IMR-90 (cell line): ENCODE measurements at regions of chr6 and their contacts with region 1.

Region 1: DNA sequence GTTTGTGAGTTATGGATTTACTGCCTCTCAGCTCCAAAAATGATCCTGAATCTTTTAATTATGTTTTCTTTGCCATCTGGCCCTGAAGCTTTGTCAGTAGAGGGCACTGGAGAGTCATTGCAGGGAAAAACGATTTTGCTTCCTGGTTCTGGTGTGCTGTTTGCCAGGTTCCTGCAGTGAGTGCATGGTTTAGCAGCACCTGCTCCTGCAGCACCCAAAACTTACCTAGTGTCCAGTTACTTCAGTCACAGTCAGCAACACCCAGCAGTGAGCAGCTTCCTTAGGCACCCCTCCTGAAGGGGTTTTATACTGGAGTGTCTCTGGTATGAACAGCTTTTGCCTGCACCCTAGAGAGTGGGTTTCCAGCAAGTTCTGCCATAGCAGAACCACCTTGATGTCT is 6.0 kb upstream of the TRIM26 start:
- DNase-seq: peak; percentile 44
- ATAC-seq: peak; percentile 57; the same call in 1 of the 2 replicates
- H3K4me3 ChIP-seq: no peak overlapping the region
- H3K27ac ChIP-seq: no peak overlapping the region
- H3K4me1 ChIP-seq: peaks cover 2% of the 10 kb centered on the region; the same call in 1 of the 2 replicates
- H3K27me3 ChIP-seq: no peaks in the 10 kb centered on the region
- CTCF ChIP-seq: peak; percentile 90
- POLR2A ChIP-seq: no peak
- RAD21 ChIP-seq: peak; percentile 70

Region 2: GRCh38 chr6:28695715-28696114 is 1523.5 kb before region 1 on chr6:
- CTCF ChIA-PET with region 1: no interaction called
- POLR2A ChIA-PET with region 1: no interaction called
- dilution Hi-C with region 1: no loop called
- in situ Hi-C with region 1: no loop called
- intact Hi-C with region 1: no loop called
- DNase-seq: peak; percentile 41
- ATAC-seq: peak; percentile 81
- H3K4me3 ChIP-seq: no peak overlapping the region
- H3K27ac ChIP-seq: no peak overlapping the region
- H3K4me1 ChIP-seq: no peaks in the 10 kb centered on the region
- H3K27me3 ChIP-seq: peaks cover 28% of the 10 kb centered on the region
- CTCF ChIP-seq: no peak
- POLR2A ChIP-seq: no peak
- RAD21 ChIP-seq: no peak

Region 3: GRCh38 chr6:30102970-30103874 is 116.0 kb before region 1 on chr6:
- CTCF ChIA-PET with region 1: no interaction called
- POLR2A ChIA-PET with region 1: no interaction called
- dilution Hi-C with region 1: no loop called
- in situ Hi-C with region 1: no loop called
- intact Hi-C with region 1: loop called (anchors 5 kb)
- DNase-seq: peak; percentile 80
- ATAC-seq: peak; percentile 77
- H3K4me3 ChIP-seq: peak overlapping the region; percentile 30
- H3K27ac ChIP-seq: no peak overlapping the region
- H3K4me1 ChIP-seq: peaks cover 6% of the 10 kb centered on the region
- H3K27me3 ChIP-seq: peaks cover 51% of the 10 kb centered on the region
- CTCF ChIP-seq: peak; percentile 94
- POLR2A ChIP-seq: peak; percentile 42; the same call in 1 of the 2 replicates
- RAD21 ChIP-seq: peak; percentile 85

Region 4: GRCh38 chr6:30326526-30327260 is 107.4 kb after region 1 on chr6 and contains the start of gene TRIM39:
- CTCF ChIA-PET with region 1: interaction called, 9 read pairs
- POLR2A ChIA-PET with region 1: no interaction called
- dilution Hi-C with region 1: no loop called
- in situ Hi-C with region 1: no loop called
- intact Hi-C with region 1: loop called (anchors 1 kb)
- DNase-seq: peak; percentile 84
- ATAC-seq: peak; percentile 79
- H3K4me3 ChIP-seq: peak within 1 kb of the TSS; percentile 96
- H3K27ac ChIP-seq: peak within 1 kb of the TSS; percentile 96
- H3K4me1 ChIP-seq: peaks cover 5% of the 10 kb centered on the region; the same call in 1 of the 2 replicates
- H3K27me3 ChIP-seq: no peaks in the 10 kb centered on the region
- CTCF ChIP-seq: no peak
- POLR2A ChIP-seq: peak; percentile 83
- RAD21 ChIP-seq: no peak
- total RNA-seq, gene TRIM39: 9.4 and 10.0 TPM in 2 replicates

Region 5: DNA sequence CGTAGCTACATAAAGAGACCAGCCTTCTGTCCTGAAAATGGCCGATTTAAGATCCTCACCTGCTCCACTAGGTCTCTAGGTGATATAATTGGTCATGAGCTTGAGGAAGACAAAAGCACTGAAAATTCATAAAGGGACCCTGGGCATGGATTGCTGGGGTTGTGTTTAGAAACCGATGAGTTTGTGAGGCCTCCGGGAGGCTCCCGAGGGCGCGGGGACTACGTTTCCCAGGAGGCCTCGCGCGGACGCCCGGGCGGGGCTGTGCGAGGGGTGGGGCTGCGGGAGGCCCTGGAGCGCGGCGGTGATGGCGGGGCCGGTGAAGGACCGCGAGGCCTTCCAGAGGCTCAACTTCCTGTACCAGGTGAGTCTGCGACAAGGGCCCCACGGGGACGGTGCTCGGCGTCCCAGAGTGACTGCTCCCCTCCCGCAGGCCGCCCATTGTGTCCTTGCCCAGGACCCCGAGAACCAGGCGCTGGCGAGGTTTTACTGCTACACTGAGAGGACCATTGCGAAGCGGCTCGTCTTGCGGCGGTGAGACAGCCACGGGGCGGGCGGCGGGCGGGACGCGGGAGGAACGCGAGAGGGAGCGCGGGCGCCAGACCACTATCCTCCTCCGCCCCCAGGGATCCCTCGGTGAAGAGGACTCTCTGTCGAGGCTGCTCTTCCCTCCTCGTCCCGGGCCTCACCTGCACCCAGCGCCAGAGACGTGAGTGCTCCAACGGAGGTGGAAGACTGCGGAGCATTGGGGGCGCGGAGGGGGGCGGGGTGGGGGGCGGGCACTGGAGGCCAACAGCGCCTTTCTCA is 125.8 kb after region 1 on chr6 and contains the start of gene RPP21:
- CTCF ChIA-PET with region 1: interaction called, 3 read pairs
- POLR2A ChIA-PET with region 1: no interaction called
- dilution Hi-C with region 1: no loop called
- in situ Hi-C with region 1: no loop called
- intact Hi-C with region 1: loop called (anchors 5 kb)
- DNase-seq: peak; percentile 70
- ATAC-seq: peak; percentile 99
- H3K4me3 ChIP-seq: peak within 1 kb of the TSS; percentile 98
- H3K27ac ChIP-seq: peak within 1 kb of the TSS; percentile 93
- H3K4me1 ChIP-seq: no peaks in the 10 kb centered on the region
- H3K27me3 ChIP-seq: no peaks in the 10 kb centered on the region
- CTCF ChIP-seq: no peak
- POLR2A ChIP-seq: peak; percentile 85
- RAD21 ChIP-seq: no peak
- total RNA-seq, gene RPP21: 20.6 and 28.9 TPM in 2 replicates

Region 6: DNA sequence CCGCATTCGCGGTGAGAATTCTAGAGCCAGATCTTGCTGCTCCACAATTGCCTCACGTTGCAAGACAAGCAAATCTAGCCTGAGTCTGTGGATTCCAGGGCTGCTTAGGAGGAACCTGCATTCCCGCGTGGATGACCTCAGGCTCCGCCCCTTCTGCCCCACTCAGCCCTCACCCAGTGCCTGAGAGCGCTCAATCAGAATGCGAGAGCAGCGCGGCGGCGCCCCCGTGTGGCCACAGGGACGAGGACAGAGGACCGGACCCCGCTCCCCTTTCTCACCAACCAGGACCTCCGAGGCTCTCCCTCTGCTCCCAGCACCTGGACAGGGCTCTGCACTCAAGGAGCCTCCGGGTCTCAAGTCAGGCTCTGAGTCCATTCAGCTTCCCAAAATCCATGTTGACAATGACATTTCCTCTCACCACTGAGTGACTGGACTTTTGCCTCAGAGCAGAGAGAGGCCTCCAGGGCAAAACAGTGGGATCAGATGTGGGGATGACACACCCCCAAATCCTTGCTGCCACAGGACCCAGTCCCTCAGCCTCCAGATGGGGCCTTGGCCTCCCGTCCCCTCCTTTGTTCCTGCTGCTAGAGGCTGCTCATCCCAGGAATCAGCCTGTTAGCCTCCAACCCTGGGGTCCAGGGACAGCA is 177.7 kb after region 1 on chr6:
- CTCF ChIA-PET with region 1: interaction called, 3 read pairs
- POLR2A ChIA-PET with region 1: no interaction called
- dilution Hi-C with region 1: no loop called
- in situ Hi-C with region 1: loop called (anchors 10 kb)
- intact Hi-C with region 1: loop called (anchors 1 kb)
- DNase-seq: peak; percentile 47
- ATAC-seq: peak; percentile 100
- H3K4me3 ChIP-seq: no peak overlapping the region
- H3K27ac ChIP-seq: no peak overlapping the region
- H3K4me1 ChIP-seq: no peaks in the 10 kb centered on the region
- H3K27me3 ChIP-seq: peaks cover 18% of the 10 kb centered on the region
- CTCF ChIP-seq: peak; percentile 82
- POLR2A ChIP-seq: no peak
- RAD21 ChIP-seq: peak; percentile 77

Region 7: DNA sequence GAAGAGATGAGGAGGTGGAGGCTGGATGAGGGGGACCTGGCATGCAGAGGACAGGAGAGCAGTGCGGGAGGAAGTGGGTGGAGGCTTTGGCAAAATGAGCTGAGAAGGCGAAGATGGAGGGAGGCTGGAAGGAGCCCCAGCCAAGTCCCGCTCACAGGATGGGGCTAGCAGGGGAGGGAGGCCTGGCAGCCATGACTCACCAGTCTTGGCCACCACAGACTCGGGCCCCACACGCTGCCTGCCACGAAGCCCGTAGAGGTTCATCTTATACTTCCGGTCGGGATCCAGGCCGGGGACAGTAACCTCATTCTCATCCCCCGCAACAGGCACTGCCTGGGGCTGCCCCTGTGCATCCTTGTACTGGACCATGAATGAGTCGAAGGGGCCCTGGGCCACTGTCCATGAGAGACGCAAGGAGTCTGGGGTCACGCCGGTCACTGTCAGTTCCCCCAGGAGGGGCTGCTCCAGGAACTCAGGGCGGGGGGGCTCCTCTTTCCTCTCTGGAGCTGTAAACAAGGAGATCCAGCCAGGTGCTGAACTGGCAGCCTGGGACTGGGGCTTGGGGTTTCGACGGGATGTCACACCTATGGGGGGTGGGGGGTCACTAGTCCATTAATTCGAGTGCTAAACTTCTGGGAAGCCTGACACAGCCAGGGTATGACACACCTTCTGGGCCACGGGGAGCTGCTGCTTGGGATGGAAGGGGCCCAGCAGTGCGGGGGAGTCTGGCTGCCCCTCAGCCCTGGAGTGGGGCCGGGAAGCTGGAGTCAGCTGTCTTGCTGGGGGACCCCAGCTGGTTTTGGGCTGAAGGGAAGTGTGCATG is 1862.1 kb after region 1 on chr6:
- CTCF ChIA-PET with region 1: no interaction called
- POLR2A ChIA-PET with region 1: interaction called, 10 read pairs
- dilution Hi-C with region 1: no loop called
- in situ Hi-C with region 1: no loop called
- intact Hi-C with region 1: no loop called
- DNase-seq: peak; percentile 89
- ATAC-seq: peak; percentile 89
- H3K4me3 ChIP-seq: no peak overlapping the region
- H3K27ac ChIP-seq: peak overlapping the region; percentile 9
- H3K4me1 ChIP-seq: peaks cover 26% of the 10 kb centered on the region
- H3K27me3 ChIP-seq: peaks cover 26% of the 10 kb centered on the region
- CTCF ChIP-seq: no peak
- POLR2A ChIP-seq: no peak
- RAD21 ChIP-seq: no peak